ENCODE measurements at regions of chr2 and their contacts with region 1.

Region 1: GRCh38 chr2:201231781-201232466 is 28.4 kb upstream of the CASP8 start:
- DNase-seq: peak; percentile 90
- ATAC-seq: peak; percentile 82
- H3K4me3 ChIP-seq: no peak overlapping the region
- H3K27ac ChIP-seq: no peak overlapping the region
- H3K4me1 ChIP-seq: no peaks in the 10 kb centered on the region
- H3K27me3 ChIP-seq: no peaks in the 10 kb centered on the region

Region 2: GRCh38 chr2:201118121-201118960 is 113.6 kb before region 1 on chr2:
- intact Hi-C with region 1: no loop called
- DNase-seq: peak; percentile 93 to 94
- ATAC-seq: peak; percentile 78
- H3K4me3 ChIP-seq: peak overlapping the region; percentile 57 to 61
- H3K27ac ChIP-seq: peak overlapping the region in 1 of 2 donors; percentile 53
- H3K4me1 ChIP-seq: peaks cover 0 to 2% of the 10 kb centered on the region in 2 donors
- H3K27me3 ChIP-seq: no peaks in the 10 kb centered on the region

Region 3: DNA sequence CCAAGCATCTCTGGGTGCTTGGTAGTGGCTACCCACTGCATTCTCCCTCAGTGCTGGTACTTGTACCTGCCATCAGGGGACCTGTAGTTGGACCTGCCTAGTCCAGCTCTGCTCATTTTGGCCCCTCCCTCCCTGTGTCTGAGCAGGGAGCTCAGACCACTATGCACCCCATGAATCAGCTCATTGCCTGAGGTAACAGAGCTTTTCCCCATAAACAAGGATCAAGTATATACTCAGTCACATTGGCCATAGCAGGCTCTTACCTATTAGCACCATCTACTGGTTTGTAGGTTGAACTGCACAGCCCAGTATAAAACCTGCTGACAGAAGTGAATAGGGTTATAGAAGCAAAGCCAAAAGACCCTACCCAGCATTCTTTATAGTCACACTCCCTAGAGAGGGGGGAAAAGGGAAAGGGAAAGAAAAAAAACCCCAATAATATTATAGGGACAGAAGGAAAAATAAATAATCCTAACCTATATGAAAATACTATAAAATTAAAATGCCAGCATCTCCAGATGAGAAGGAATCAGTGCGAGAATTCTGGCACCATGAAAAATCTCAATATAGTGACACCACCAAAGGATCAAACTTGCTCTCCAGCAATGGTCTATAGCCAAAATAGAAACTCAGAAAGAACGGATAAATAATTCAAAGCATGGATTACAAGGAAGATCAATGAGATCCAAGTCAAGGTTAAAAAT is 132.1 kb after region 1 on chr2:
- intact Hi-C with region 1: loop called (anchors 5 kb)
- DNase-seq: no peak
- ATAC-seq: peak; percentile 78
- H3K4me3 ChIP-seq: no peak overlapping the region
- H3K27ac ChIP-seq: no peak overlapping the region
- H3K4me1 ChIP-seq: no peaks in the 10 kb centered on the region
- H3K27me3 ChIP-seq: no peaks in the 10 kb centered on the region

Region 4: GRCh38 chr2:201402651-201403562 is 171.0 kb after region 1 on chr2:
- intact Hi-C with region 1: no loop called
- DNase-seq: no peak
- ATAC-seq: no peak
- H3K4me3 ChIP-seq: no peak overlapping the region
- H3K27ac ChIP-seq: no peak overlapping the region
- H3K4me1 ChIP-seq: peaks cover 2 to 6% of the 10 kb centered on the region in 2 donors
- H3K27me3 ChIP-seq: no peaks in the 10 kb centered on the region

Region 5: GRCh38 chr2:201414099-201415023 is 182.4 kb after region 1 on chr2:
- intact Hi-C with region 1: no loop called
- DNase-seq: no peak
- ATAC-seq: peak; percentile 43
- H3K4me3 ChIP-seq: no peak overlapping the region
- H3K27ac ChIP-seq: peak overlapping the region in 1 of 2 donors; percentile 90
- H3K4me1 ChIP-seq: peaks cover 4% of the 10 kb centered on the region in 2 donors
- H3K27me3 ChIP-seq: no peaks in the 10 kb centered on the region

Region 6: DNA sequence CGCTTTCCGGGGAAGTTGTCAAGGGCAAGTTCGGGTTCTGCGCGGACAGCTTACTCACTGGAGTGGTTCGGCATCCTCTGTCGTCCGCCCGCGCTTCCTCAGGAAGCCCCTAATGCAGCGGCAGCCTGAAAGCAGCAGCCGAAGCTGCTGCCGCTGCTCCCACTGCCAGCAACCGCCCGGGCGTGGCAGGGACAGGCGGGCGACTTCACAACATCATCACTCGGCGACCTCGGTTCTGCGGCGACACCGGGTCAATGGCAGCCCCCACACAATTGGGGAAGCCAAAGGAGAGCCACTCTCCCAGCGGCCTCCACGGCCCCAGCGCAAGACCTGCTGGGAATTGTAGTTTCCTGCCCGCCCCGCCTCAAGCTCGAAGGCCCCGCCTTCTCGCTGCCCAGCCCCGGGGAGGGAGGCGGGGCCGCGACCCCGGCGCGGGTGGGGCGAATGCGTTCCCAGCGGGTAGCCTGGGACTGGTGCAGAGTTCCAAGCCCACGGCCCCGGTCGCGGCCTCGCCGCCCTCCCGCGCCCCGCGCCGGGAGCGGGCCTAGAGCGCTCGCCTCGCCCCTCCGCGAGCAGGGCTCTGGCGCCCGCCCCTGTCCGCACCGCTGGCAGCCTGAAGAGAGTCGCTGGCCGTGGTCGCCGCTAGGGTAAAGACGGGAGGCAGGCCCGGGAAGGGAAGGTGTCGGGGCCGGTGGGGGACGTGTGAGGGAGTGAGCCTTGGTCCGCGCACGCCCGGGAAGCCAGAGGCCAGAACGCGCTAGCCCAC is 219.6 kb after region 1 on chr2 and contains the starts of genes STRADB and TRAK2:
- intact Hi-C with region 1: loop called in 1 of 2 experiments (anchors 10 kb)
- DNase-seq: peak; percentile 98
- ATAC-seq: peak; percentile 97
- H3K4me3 ChIP-seq: peak within 1 kb of the TSS; percentile 89 to 98
- H3K27ac ChIP-seq: peak within 1 kb of the TSS in 1 of 2 donors; percentile 77
- H3K4me1 ChIP-seq: peaks cover 6 to 8% of the 10 kb centered on the region in 2 donors
- H3K27me3 ChIP-seq: no peaks in the 10 kb centered on the region
- total RNA-seq, gene STRADB: 15.7 to 17.7 TPM
- total RNA-seq, gene TRAK2: 84.7 to 119 TPM

Region 7: GRCh38 chr2:201618744-201619662 is 387.1 kb after region 1 on chr2:
- intact Hi-C with region 1: loop called (anchors 2 to 10 kb)
- DNase-seq: peak; percentile 84 to 93
- ATAC-seq: peak; percentile 93
- H3K4me3 ChIP-seq: no peak overlapping the region
- H3K27ac ChIP-seq: no peak overlapping the region
- H3K4me1 ChIP-seq: no peaks in the 10 kb centered on the region
- H3K27me3 ChIP-seq: no peaks in the 10 kb centered on the region

Region 8: DNA sequence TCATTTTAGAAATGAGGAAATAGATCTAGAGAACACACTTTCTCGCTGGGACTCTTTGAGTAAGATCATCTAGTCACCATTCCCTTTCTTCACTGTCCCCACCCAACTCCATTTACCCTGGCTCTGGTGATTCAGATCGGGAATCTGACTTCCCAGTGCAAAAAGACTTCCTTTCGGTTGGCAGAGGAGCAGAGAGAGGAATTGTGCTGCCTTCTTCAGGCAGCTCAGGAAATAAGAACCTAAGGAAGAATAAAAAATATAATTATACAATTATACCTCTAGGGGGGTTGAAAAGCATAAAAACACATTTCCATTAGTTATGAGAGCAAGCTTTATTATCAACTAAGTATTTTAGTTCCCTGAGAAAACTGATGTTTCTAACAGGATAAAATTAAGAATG is 475.8 kb after region 1 on chr2:
- intact Hi-C with region 1: loop called in 1 of 2 experiments (anchors 10 kb)
- DNase-seq: no peak
- ATAC-seq: no peak
- H3K4me3 ChIP-seq: no peak overlapping the region
- H3K27ac ChIP-seq: no peak overlapping the region
- H3K4me1 ChIP-seq: no peaks in the 10 kb centered on the region
- H3K27me3 ChIP-seq: no peaks in the 10 kb centered on the region

Measured in aorta (tissue), 5 donors.